Ascending aorta (tissue), 2 donors: ENCODE measurements at regions of chr10 and their contacts with region 1.

Region 1: DNA sequence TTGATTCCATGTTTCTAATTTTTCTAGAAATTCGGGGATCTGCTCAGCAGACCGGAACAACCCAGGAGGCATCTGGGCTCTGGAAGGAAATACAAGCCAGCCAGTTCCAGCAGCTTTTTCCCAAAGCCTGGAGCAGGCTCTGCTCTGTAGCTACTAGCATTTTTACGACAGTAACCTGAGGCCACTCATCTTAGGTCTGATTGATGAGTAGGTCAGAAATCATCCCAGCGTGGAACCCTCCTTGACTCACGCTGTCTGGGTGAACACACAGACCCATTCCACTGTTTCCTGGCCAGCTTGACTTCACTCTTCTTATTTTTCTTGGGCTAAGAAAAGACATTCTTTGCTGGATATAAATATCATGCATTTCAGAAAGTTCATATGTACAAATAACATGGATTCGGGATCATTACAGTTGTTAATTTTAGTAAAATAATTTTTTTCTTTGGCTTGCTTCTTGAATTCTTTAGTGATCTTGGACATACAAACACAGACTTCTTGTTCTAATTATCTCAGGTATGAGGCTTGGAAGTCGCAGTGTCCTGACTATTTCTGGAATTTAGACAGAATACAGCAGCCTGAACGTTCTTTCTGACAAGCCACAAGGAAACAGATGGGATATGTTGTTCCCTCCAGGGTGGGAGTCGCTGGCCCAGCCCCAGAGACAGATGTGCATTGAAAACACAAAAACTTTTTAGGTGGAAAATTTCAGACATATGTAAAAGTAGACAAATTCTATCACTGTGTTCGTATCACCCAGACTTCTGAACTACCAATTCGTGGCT is 54.6 kb upstream of the PITRM1 start:
- DNase-seq: no peak
- H3K4me3 ChIP-seq: peak overlapping the region in 1 of 2 donors; percentile 7
- H3K27ac ChIP-seq: peak overlapping the region; percentile 44 to 60
- H3K4me1 ChIP-seq: peaks cover 0 to 21% of the 10 kb centered on the region in 2 donors
- H3K27me3 ChIP-seq: no peaks in the 10 kb centered on the region
- CTCF ChIP-seq: no peak

Region 2: DNA sequence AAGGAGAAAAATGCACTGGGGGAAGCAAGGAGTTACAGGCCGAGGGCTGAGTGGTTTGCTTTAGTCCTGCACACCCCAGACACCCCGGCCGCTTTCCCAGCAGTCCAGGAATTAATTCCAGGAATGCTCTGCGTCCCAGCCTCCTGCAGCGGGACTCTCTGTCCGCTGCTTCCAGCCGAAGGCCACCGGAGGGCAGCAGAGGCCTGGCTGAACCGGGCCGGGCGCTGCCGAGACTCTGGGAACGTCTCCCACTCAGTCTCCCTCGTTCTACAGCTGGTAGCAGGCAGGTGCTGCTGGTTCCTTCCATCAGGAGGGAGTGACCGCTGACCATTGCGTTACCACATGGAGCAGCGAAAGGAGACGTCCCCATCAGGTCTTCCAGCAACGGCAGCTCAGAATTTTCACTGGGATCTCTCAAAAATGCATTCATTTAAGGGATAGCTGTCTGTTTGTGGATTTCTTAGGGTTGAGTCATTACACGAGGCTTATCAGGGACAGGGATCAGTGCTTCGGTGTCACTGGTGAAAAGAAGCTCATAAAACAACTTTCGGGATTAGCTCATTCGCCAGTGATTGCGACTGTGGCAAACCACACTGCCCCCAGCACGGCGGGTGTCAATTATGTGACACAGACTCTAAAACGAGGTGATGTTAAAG is 29.7 kb before region 1 on chr10:
- intact Hi-C with region 1: loop called (anchors 2 kb)
- DNase-seq: peak; percentile 26 to 90
- H3K4me3 ChIP-seq: peak overlapping the region in 1 of 2 donors; percentile 54
- H3K27ac ChIP-seq: no peak overlapping the region
- H3K4me1 ChIP-seq: peaks cover 3 to 4% of the 10 kb centered on the region in 2 donors
- H3K27me3 ChIP-seq: no peaks in the 10 kb centered on the region
- CTCF ChIP-seq: peak; percentile 95 to 96 (median 96)

Region 3: GRCh38 chr10:3273966-3274365 is 46.8 kb after region 1 on chr10:
- intact Hi-C with region 1: no loop called
- DNase-seq: no peak
- H3K4me3 ChIP-seq: no peak overlapping the region
- H3K27ac ChIP-seq: no peak overlapping the region
- H3K4me1 ChIP-seq: peaks cover 6 to 14% of the 10 kb centered on the region in 2 donors
- H3K27me3 ChIP-seq: no peaks in the 10 kb centered on the region
- CTCF ChIP-seq: no peak

Region 4: GRCh38 chr10:3776796-3777571 is 549.8 kb after region 1 on chr10:
- intact Hi-C with region 1: loop called (anchors 5 kb)
- DNase-seq: peak; percentile 53 to 92
- H3K4me3 ChIP-seq: peak overlapping the region; percentile 79 to 99
- H3K27ac ChIP-seq: peak overlapping the region; percentile 92 to 97
- H3K4me1 ChIP-seq: peaks cover 21 to 45% of the 10 kb centered on the region in 2 donors
- H3K27me3 ChIP-seq: no peaks in the 10 kb centered on the region
- CTCF ChIP-seq: no peak